ENCODE measurements at regions of chr19 and their contacts with region 1.

Region 1: DNA sequence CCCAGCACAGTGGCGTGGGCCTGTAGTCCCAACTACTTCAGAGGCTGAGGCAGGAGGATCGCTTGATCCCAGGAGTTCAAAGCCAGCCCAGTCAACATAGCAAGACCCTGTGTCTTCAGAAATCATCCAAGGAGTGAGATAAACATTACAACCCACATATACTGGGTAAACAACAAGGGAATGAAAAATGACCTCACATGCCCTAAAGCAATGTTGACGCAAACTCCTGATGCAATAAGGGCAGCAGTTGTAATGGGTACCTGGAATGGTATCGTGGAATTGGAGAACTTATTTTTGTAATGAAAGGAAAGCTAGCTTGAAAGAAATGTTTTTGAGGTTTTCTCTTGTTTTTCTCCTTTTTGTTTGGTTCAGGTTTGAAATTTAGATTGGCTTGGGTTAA is 24.5 kb upstream of the LGALS16 start:
- DNase-seq: no peak
- ATAC-seq: no peak
- H3K4me3 ChIP-seq: no peak overlapping the region
- H3K4me3 Mint-ChIP-seq: no peak overlapping the region
- H3K27ac ChIP-seq: no peak overlapping the region
- H3K27ac Mint-ChIP-seq: no peak overlapping the region
- H3K4me1 ChIP-seq: no peaks in the 10 kb centered on the region
- H3K4me1 Mint-ChIP-seq: peaks cover 0 to 2% (median 0%) of the 10 kb centered on the region in 7 donors
- H3K27me3 ChIP-seq: peaks cover 0 to 3% of the 10 kb centered on the region in 2 donors
- H3K27me3 Mint-ChIP-seq: peaks cover 12 to 26% (median 20%) of the 10 kb centered on the region in 5 donors

Region 2: DNA sequence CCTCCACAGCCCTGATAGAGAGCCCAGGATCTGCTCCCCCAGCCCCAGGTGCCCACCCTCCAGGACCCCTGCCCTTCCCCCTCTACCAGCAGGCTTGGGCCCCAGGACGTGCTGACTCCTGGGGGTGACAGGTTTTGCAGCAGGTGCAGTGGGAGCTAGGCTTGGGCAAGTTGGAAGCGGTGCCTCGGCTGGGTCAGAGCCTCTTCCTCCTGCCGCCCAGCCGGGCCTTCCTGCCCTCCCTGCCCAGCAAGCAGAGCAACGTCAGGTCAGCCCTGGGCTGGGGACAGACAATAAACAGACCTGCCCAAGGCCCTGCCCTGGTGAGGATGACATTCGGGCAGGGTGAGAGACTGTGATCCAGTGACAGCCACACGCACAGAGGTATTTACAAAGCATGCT is 443.6 kb before region 1 on chr19:
- CTCF ChIA-PET with region 1: no interaction called
- POLR2A ChIA-PET with region 1: no interaction called
- intact Hi-C with region 1: no loop called
- DNase-seq: no peak
- ATAC-seq: no peak
- H3K4me3 ChIP-seq: no peak overlapping the region
- H3K4me3 Mint-ChIP-seq: no peak overlapping the region
- H3K27ac ChIP-seq: no peak overlapping the region
- H3K27ac Mint-ChIP-seq: peak overlapping the region in 2 of 9 donors; percentile 7 to 42
- H3K4me1 ChIP-seq: no peaks in the 10 kb centered on the region
- H3K4me1 Mint-ChIP-seq: peaks cover 0 to 4% (median 0%) of the 10 kb centered on the region in 7 donors
- H3K27me3 ChIP-seq: no peaks in the 10 kb centered on the region
- H3K27me3 Mint-ChIP-seq: peaks cover 5 to 31% (median 10%) of the 10 kb centered on the region in 5 donors

Region 3: GRCh38 chr19:39557441-39558151 is 73.6 kb before region 1 on chr19:
- CTCF ChIA-PET with region 1: no interaction called
- POLR2A ChIA-PET with region 1: no interaction called
- intact Hi-C with region 1: loop called in 1 of 2 experiments (anchors 2 kb)
- DNase-seq: peak in 1 of 9 donors; percentile 16
- ATAC-seq: peak; percentile 50
- H3K4me3 ChIP-seq: peak overlapping the region; percentile 61
- H3K4me3 Mint-ChIP-seq: peak overlapping the region; percentile 48 to 89 (median 80)
- H3K27ac ChIP-seq: peak overlapping the region; percentile 64
- H3K27ac Mint-ChIP-seq: peak overlapping the region; percentile 91 to 98 (median 92)
- H3K4me1 ChIP-seq: peaks cover 10 to 18% of the 10 kb centered on the region in 2 donors
- H3K4me1 Mint-ChIP-seq: peaks cover 19 to 38% (median 31%) of the 10 kb centered on the region in 7 donors
- H3K27me3 ChIP-seq: no peaks in the 10 kb centered on the region
- H3K27me3 Mint-ChIP-seq: no peaks in the 10 kb centered on the region

Region 4: GRCh38 chr19:41192574-41193429 is 1561.6 kb after region 1 on chr19 and contains the start of gene CYP2S1:
- CTCF ChIA-PET with region 1: no interaction called
- POLR2A ChIA-PET with region 1: no interaction called
- intact Hi-C with region 1: no loop called
- DNase-seq: peak in 4 of 9 donors; percentile 16 to 42 (median 18)
- ATAC-seq: peak; percentile 59
- H3K4me3 ChIP-seq: no peak within 1 kb of the TSS
- H3K4me3 Mint-ChIP-seq: peak within 1 kb of the TSS in 9 of 10 donors; percentile 30 to 76 (median 60)
- H3K27ac ChIP-seq: no peak within 1 kb of the TSS
- H3K27ac Mint-ChIP-seq: peak within 1 kb of the TSS in 1 of 9 donors; percentile 30
- H3K4me1 ChIP-seq: peaks cover 0 to 13% of the 10 kb centered on the region in 2 donors
- H3K4me1 Mint-ChIP-seq: peaks cover 15 to 18% (median 17%) of the 10 kb centered on the region in 7 donors
- H3K27me3 ChIP-seq: peaks cover 0 to 12% of the 10 kb centered on the region in 2 donors
- H3K27me3 Mint-ChIP-seq: peaks cover 36 to 47% (median 39%) of the 10 kb centered on the region in 5 donors
- total RNA-seq, gene CYP2S1: 0.24 to 4.1 (median 0.74) TPM

Measured in naive thymus-derived CD4-positive, alpha-beta T cell (primary cell).